Activated B cell treated with CpG ODN at 0.5 μM for 24 hours (primary cell): ENCODE measurements at regions of chr16 and their contacts with region 1.

Region 1: GRCh38 chr16:23510164-23510914 is at the start of gene GGA2:
- DNase-seq: peak; percentile 77
- ATAC-seq: peak; percentile 75
- H3K4me3 Mint-ChIP-seq: peak within 1 kb of the TSS; percentile 90
- H3K27ac Mint-ChIP-seq: peak within 1 kb of the TSS; percentile 95
- H3K4me1 Mint-ChIP-seq: peaks cover 59% of the 10 kb centered on the region
- H3K27me3 Mint-ChIP-seq: no peaks in the 10 kb centered on the region
- CTCF ChIP-seq: no peak
- total RNA-seq, gene GGA2: 264 and 281 TPM in 2 replicates

Region 2: GRCh38 chr16:23428351-23428750 is 82.0 kb before region 1 on chr16:
- CTCF ChIA-PET with region 1: no interaction called
- POLR2A ChIA-PET with region 1: no interaction called
- intact Hi-C with region 1: no loop called
- DNase-seq: no peak
- ATAC-seq: no peak
- H3K4me3 Mint-ChIP-seq: no peak overlapping the region
- H3K27ac Mint-ChIP-seq: no peak overlapping the region
- H3K4me1 Mint-ChIP-seq: no peaks in the 10 kb centered on the region
- H3K27me3 Mint-ChIP-seq: no peaks in the 10 kb centered on the region
- CTCF ChIP-seq: no peak

Region 3: GRCh38 chr16:23595951-23596720 is 85.8 kb after region 1 on chr16 and contains the start of gene NDUFAB1:
- CTCF ChIA-PET with region 1: interaction called, 7 read pairs
- POLR2A ChIA-PET with region 1: interaction called, 6 read pairs
- intact Hi-C with region 1: loop called (anchors 2 kb)
- DNase-seq: peak; percentile 95
- ATAC-seq: peak; percentile 99
- H3K4me3 Mint-ChIP-seq: peak within 1 kb of the TSS; percentile 88
- H3K27ac Mint-ChIP-seq: peak within 1 kb of the TSS; percentile 65
- H3K4me1 Mint-ChIP-seq: peaks cover 28% of the 10 kb centered on the region
- H3K27me3 Mint-ChIP-seq: no peaks in the 10 kb centered on the region
- CTCF ChIP-seq: peak; percentile 89
- total RNA-seq, gene NDUFAB1: 68.4 and 74.5 TPM in 2 replicates

Region 4: GRCh38 chr16:23770744-23771426 is 260.5 kb after region 1 on chr16:
- CTCF ChIA-PET with region 1: no interaction called
- POLR2A ChIA-PET with region 1: no interaction called
- intact Hi-C with region 1: no loop called
- DNase-seq: no peak
- ATAC-seq: no peak
- H3K4me3 Mint-ChIP-seq: no peak overlapping the region
- H3K27ac Mint-ChIP-seq: no peak overlapping the region
- H3K4me1 Mint-ChIP-seq: no peaks in the 10 kb centered on the region
- H3K27me3 Mint-ChIP-seq: peaks cover 11% of the 10 kb centered on the region
- CTCF ChIP-seq: no peak